ENCODE measurements at regions of chr5 and their contacts with region 1.

Region 1: GRCh38 chr5:96714951-96715451 is 52.8 kb downstream of the CAST start:
- DNase-seq: peak in 7 of 9 donors; percentile 28 to 64 (median 55)
- ATAC-seq: peak; percentile 87
- H3K4me3 ChIP-seq: no peak overlapping the region
- H3K4me3 Mint-ChIP-seq: peak overlapping the region in 3 of 10 donors; percentile 3 to 48 (median 29)
- H3K27ac ChIP-seq: peak overlapping the region; percentile 29
- H3K27ac Mint-ChIP-seq: peak overlapping the region; percentile 35 to 89 (median 80)
- H3K4me1 ChIP-seq: peaks cover 6 to 17% of the 10 kb centered on the region in 2 donors
- H3K4me1 Mint-ChIP-seq: peaks cover 32 to 78% (median 52%) of the 10 kb centered on the region in 7 donors
- H3K27me3 ChIP-seq: no peaks in the 10 kb centered on the region
- H3K27me3 Mint-ChIP-seq: no peaks in the 10 kb centered on the region

Region 2: DNA sequence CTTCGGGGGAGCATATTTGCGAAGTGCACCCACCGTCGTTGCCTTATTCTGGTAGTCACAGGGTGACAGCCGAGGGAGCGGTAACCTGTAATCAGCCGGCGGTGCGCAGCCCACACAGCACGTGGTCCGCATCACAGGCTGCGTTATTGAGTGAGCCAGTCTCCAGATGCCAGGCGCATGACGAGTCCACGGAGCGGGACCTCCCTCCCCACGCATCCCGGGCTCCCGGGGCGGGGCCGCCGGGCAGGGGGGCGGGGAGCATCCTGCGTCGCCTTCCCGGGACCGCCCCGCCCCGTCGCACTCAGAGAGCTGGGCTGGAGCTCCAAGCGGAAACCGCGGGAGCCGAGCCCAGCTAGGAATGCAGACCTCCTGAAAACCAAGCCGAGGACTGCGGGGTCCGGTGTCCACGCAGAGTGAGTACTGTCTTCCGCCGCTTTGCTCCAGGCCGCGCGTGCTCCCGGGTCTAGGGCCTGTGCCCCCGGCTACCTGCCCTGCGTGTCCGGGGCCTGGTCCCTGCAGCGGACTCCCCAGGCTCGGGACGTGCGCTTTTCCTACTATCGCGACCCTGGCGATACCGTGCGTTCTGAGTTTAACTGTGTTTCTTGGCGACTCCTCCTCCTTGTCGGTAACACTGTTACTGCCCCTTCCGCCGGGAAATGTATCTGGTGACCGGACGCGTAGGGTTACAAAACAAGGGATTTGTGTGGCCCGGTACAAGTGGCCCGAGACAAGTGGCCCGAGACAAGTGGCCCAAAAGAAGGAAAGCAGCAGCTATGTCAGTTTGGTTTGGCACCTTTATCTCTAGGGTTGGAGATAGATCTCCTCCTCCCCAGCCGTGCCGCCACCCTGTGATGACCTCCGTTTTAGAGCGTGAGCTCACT is 12.3 kb before region 1 on chr5:
- CTCF ChIA-PET with region 1: no interaction called
- POLR2A ChIA-PET with region 1: interaction called, 6 read pairs
- intact Hi-C with region 1: loop called (anchors 1 to 2 kb)
- DNase-seq: peak; percentile 60 to 88 (median 77)
- ATAC-seq: peak; percentile 91
- H3K4me3 ChIP-seq: peak overlapping the region; percentile 75
- H3K4me3 Mint-ChIP-seq: peak overlapping the region; percentile 87 to 98 (median 94)
- H3K27ac ChIP-seq: peak overlapping the region; percentile 82
- H3K27ac Mint-ChIP-seq: peak overlapping the region; percentile 90 to 98 (median 96)
- H3K4me1 ChIP-seq: peaks cover 7 to 20% of the 10 kb centered on the region in 2 donors
- H3K4me1 Mint-ChIP-seq: peaks cover 18 to 56% (median 29%) of the 10 kb centered on the region in 7 donors
- H3K27me3 ChIP-seq: no peaks in the 10 kb centered on the region
- H3K27me3 Mint-ChIP-seq: no peaks in the 10 kb centered on the region

Region 3: DNA sequence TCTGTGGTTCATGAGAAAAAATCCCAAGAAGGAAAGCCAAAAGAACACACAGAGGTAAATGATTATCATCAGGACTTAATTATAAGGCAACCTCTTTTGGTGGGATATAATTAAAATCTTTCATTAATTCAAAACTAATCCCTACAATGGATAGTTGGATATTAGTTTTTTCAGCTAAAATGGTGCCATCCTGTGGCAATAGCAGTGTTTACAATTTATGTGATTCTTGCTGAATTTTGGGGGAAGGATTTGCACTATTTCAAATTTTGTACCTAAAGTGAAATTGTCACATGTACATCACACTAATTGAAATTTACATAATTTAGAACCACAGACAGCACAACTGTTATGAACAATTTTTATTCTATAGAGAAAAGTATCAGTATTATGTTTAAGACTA is 14.2 kb after region 1 on chr5:
- CTCF ChIA-PET with region 1: interaction called, 3 read pairs
- POLR2A ChIA-PET with region 1: no interaction called
- intact Hi-C with region 1: loop called in 1 of 2 experiments (anchors 2 kb)
- DNase-seq: no peak
- ATAC-seq: no peak
- H3K4me3 ChIP-seq: no peak overlapping the region
- H3K4me3 Mint-ChIP-seq: peak overlapping the region in 1 of 10 donors; percentile 15
- H3K27ac ChIP-seq: no peak overlapping the region
- H3K27ac Mint-ChIP-seq: peak overlapping the region in 2 of 9 donors; percentile 18 to 30
- H3K4me1 ChIP-seq: no peaks in the 10 kb centered on the region
- H3K4me1 Mint-ChIP-seq: peaks cover 5 to 39% (median 9%) of the 10 kb centered on the region in 7 donors
- H3K27me3 ChIP-seq: no peaks in the 10 kb centered on the region
- H3K27me3 Mint-ChIP-seq: no peaks in the 10 kb centered on the region